ENCODE measurements at regions of chr3 and their contacts with region 1.

Region 1: GRCh38 chr3:185659942-185660921 is 74.1 kb downstream of the SENP2 start:
- DNase-seq: peak; percentile 72
- H3K4me3 Mint-ChIP-seq: no peak overlapping the region
- H3K27ac Mint-ChIP-seq: no peak overlapping the region
- H3K4me1 Mint-ChIP-seq: peaks cover 12% of the 10 kb centered on the region
- H3K27me3 Mint-ChIP-seq: peaks cover 23% of the 10 kb centered on the region

Region 2: DNA sequence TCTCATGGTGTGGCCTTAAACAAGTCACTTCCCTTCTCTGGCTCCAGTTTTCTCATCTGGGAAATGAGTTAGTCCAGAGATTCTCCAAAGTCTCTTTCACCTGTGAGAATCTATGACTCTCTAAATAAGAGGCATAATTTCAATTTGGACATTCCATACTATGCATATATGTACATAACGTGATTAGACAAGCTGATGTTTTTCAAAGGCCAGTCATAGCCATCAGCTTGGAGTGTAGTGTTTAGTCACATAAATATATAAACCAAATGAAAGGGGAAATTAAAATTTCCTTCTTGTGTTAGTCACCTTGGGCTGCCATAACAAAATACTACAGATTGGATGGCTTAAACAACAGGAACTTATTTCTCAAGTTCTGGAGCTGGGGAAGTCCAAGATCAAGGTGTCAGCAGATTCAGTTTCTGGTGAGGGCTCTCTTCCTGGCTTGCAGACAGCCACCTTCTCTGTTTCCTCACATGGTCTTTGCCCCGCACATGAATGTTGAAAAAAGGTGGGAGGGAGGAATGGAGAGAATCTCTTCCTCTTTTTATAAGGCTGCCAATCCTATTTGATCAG is 180.8 kb before region 1 on chr3:
- CTCF ChIA-PET with region 1: no interaction called
- POLR2A ChIA-PET with region 1: no interaction called
- DNase-seq: no peak
- H3K4me3 Mint-ChIP-seq: no peak overlapping the region
- H3K27ac Mint-ChIP-seq: no peak overlapping the region
- H3K4me1 Mint-ChIP-seq: peaks cover 10% of the 10 kb centered on the region
- H3K27me3 Mint-ChIP-seq: no peaks in the 10 kb centered on the region

Region 3: GRCh38 chr3:185625784-185626183 is 34.4 kb before region 1 on chr3:
- CTCF ChIA-PET with region 1: interaction called, 11 read pairs
- POLR2A ChIA-PET with region 1: no interaction called
- DNase-seq: no peak
- H3K4me3 Mint-ChIP-seq: no peak overlapping the region
- H3K27ac Mint-ChIP-seq: peak overlapping the region; percentile 22
- H3K4me1 Mint-ChIP-seq: peaks cover 10% of the 10 kb centered on the region
- H3K27me3 Mint-ChIP-seq: no peaks in the 10 kb centered on the region

Region 4: GRCh38 chr3:185645596-185646381 is 14.4 kb before region 1 on chr3:
- CTCF ChIA-PET with region 1: interaction called, 22 read pairs
- POLR2A ChIA-PET with region 1: interaction called, 4 read pairs
- DNase-seq: no peak
- H3K4me3 Mint-ChIP-seq: no peak overlapping the region
- H3K27ac Mint-ChIP-seq: no peak overlapping the region
- H3K4me1 Mint-ChIP-seq: no peaks in the 10 kb centered on the region
- H3K27me3 Mint-ChIP-seq: peaks cover 7% of the 10 kb centered on the region

Region 5: GRCh38 chr3:185733980-185734724 is 73.9 kb after region 1 on chr3:
- CTCF ChIA-PET with region 1: interaction called, 10 read pairs
- POLR2A ChIA-PET with region 1: no interaction called
- DNase-seq: no peak
- H3K4me3 Mint-ChIP-seq: no peak overlapping the region
- H3K27ac Mint-ChIP-seq: no peak overlapping the region
- H3K4me1 Mint-ChIP-seq: peaks cover 8% of the 10 kb centered on the region
- H3K27me3 Mint-ChIP-seq: peaks cover 4% of the 10 kb centered on the region

Measured in activated CD4-positive, alpha-beta memory T cell treated with anti-CD3 and anti-CD28 coated beads, Interleukin-2, amount 10 ng/mL, durations not matched to agents 7 days and 5 days (primary cell).